Endothelial cell of umbilical vein (primary cell): ENCODE measurements at regions of chr20 and their contacts with region 1.

Region 1: DNA sequence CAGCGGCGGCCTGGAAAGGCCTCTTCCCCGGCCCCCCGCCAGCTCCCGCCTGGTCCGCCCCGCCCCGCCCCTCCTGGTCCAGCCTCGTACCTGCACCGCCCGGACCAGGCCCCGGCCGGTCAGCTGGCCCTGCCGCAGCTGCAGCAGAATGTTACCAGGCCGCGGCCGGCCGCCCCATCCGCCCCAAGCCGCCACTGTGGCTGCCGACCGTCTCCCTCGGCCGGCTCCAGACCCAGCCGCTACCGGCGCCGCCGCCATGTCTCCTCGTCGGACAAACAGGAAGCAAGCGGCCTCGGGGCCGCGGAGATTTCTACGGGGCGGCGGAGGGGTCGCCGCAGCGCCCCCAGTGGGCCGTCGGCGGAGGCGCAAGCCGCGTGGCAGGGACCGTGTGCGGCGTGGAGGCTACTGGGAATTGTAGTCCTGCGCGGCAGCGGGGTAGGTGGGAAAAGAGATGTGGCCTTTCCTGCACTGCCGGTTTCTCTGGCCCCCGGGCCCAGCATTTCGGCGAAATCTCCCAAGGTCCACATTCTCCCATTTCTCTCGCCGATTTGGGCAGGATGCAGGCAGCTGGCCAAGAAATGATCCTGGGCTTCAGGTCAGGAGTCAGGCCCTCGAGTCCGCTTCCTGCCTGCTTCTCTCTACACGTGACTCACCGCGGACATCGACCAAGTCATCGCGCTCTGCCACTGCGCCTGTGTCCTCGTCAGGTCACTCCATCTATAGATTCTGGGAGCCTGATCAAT is at the start of gene TRPC4AP:
- DNase-seq: peak; percentile 94
- H3K4me3 ChIP-seq: peak within 1 kb of the TSS; percentile 46 to 98 (median 66)
- H3K27ac ChIP-seq: peak within 1 kb of the TSS; percentile 88
- H3K4me1 ChIP-seq: peaks cover 42% of the 10 kb centered on the region
- H3K27me3 ChIP-seq: no peaks in the 10 kb centered on the region
- CTCF ChIP-seq: peak; percentile 97 to 100
- POLR2A ChIP-seq: peak; percentile 94
- total RNA-seq, gene TRPC4AP: 88.3 and 89.0 TPM in 2 replicates

Region 2: DNA sequence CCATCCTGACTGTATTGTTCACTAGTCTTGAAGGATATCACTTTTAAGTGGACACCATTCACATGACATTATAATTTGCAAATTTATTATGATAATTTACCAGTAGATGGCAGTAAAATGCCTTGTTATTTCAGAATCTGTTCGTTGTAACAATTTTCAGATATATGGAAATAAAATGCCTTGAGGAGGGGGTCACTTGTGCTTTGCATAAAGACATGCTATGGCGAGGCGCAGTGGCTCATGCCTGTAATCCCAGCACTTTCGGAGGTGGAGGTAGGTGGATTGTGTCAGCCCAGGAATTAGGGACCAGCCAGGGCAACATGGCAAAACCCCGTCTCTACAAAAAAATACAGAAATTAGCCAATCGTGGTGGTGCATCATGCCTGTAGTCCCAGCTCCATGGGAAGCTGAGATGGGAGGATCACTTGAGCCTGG is 258.2 kb before region 1 on chr20:
- CTCF ChIA-PET with region 1: interaction called, 7 read pairs
- POLR2A ChIA-PET with region 1: no interaction called
- dilution Hi-C with region 1: no loop called
- intact Hi-C with region 1: loop called (anchors 5 kb)
- DNase-seq: peak; percentile 50
- H3K4me3 ChIP-seq: no peak overlapping the region
- H3K27ac ChIP-seq: no peak overlapping the region
- H3K4me1 ChIP-seq: peaks cover 2% of the 10 kb centered on the region
- H3K27me3 ChIP-seq: peaks cover 16 to 25% of the 10 kb centered on the region in 2 experiments
- CTCF ChIP-seq: peak in 1 of 2 donors; percentile 18
- POLR2A ChIP-seq: no peak

Region 3: GRCh38 chr20:35055445-35056276 is 37.0 kb before region 1 on chr20:
- CTCF ChIA-PET with region 1: interaction called, 10 read pairs
- POLR2A ChIA-PET with region 1: no interaction called
- dilution Hi-C with region 1: no loop called
- intact Hi-C with region 1: loop called (anchors 1 kb)
- DNase-seq: no peak
- H3K4me3 ChIP-seq: no peak overlapping the region
- H3K27ac ChIP-seq: peak overlapping the region; percentile 10
- H3K4me1 ChIP-seq: peaks cover 27% of the 10 kb centered on the region
- H3K27me3 ChIP-seq: no peaks in the 10 kb centered on the region
- CTCF ChIP-seq: no peak
- POLR2A ChIP-seq: no peak

Region 4: GRCh38 chr20:35129647-35130069 is 37.0 kb after region 1 on chr20:
- CTCF ChIA-PET with region 1: interaction called, 59 read pairs
- POLR2A ChIA-PET with region 1: no interaction called
- dilution Hi-C with region 1: no loop called
- intact Hi-C with region 1: no loop called
- DNase-seq: peak; percentile 70
- H3K4me3 ChIP-seq: no peak overlapping the region
- H3K27ac ChIP-seq: peak overlapping the region; percentile 78
- H3K4me1 ChIP-seq: peaks cover 25% of the 10 kb centered on the region
- H3K27me3 ChIP-seq: no peaks in the 10 kb centered on the region
- CTCF ChIP-seq: no peak
- POLR2A ChIP-seq: no peak

Region 5: DNA sequence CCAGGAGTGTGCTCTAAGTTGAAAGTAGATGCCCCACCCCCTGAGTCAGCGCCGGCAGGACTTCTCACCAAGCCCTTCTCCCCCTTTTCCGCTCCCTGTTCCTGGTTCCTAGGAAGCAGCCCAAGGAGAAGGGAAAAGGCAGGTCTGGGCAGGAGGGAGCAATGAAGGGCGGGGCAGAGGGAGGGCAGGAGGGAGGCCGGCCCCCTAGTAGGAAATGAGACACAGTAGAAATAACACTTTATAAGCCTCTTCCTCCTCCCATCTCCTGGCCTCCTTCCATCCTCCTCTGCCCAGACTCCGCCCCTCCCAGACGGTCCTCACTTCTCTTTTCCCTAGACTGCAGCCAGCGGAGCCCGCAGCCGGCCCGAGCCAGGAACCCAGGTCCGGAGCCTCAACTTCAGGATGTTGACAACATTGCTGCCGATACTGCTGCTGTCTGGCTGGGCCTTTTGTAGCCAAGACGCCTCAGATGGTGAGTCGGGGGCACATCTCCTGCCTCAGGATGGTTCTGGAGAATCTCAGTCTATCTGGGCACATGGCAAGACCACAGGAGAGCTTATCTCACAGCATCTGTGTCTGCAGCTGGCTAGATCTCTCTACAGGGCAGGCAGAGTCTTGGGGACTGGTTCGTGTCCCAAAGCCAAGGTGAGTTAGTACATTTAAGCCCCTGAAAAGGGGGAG is 79.2 kb after region 1 on chr20 and contains the start of gene PROCR:
- CTCF ChIA-PET with region 1: interaction called, 33 read pairs
- POLR2A ChIA-PET with region 1: no interaction called
- dilution Hi-C with region 1: no loop called
- intact Hi-C with region 1: loop called (anchors 2 kb)
- DNase-seq: peak; percentile 98
- H3K4me3 ChIP-seq: peak within 1 kb of the TSS; percentile 70 to 93 (median 80)
- H3K27ac ChIP-seq: peak within 1 kb of the TSS; percentile 79
- H3K4me1 ChIP-seq: peaks cover 37% of the 10 kb centered on the region
- H3K27me3 ChIP-seq: no peaks in the 10 kb centered on the region
- CTCF ChIP-seq: no peak
- POLR2A ChIP-seq: peak; percentile 98
- total RNA-seq, gene PROCR: 228 and 251 TPM in 2 replicates

Region 6: DNA sequence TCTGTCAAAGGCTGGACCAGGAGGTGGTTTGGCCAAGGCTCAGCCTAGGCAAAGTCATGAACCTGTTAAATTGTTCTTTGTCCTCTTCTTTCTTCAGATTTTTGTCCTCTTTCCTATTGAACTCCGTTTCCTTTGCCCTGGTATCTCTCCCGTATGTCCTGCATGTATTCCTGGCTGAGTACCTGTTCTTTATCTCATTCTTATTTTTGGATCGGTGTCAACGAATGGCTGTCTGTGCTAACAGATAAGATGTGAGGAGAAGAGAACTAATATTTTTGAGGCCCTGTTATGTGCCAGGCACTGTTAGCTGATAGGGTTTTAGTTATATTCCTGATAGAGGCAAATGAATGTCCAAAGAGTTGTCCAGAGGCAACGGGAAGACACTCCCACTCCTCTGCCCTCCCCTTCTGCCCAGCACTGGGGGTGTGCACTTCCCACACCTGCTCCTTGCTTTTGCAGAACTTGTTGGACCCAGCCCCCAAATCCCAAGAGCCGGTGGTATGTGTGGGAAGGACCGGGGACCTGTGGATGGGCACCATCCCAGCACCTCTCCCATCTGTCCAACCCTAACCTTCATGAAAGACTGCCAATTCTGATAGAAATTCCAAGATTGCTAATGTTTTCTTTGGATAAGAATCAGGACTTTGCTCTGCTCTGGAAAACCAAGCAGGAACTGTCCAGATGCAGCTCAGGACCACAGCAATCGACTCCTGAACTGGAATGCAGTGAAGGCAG is 164.6 kb after region 1 on chr20:
- CTCF ChIA-PET with region 1: interaction called, 10 read pairs
- POLR2A ChIA-PET with region 1: no interaction called
- dilution Hi-C with region 1: no loop called
- intact Hi-C with region 1: no loop called
- DNase-seq: peak; percentile 63
- H3K4me3 ChIP-seq: no peak overlapping the region
- H3K27ac ChIP-seq: no peak overlapping the region
- H3K4me1 ChIP-seq: peaks cover 9% of the 10 kb centered on the region
- H3K27me3 ChIP-seq: peaks cover 0 to 2% of the 10 kb centered on the region in 2 experiments
- CTCF ChIP-seq: no peak
- POLR2A ChIP-seq: no peak